ENCODE measurements at regions of chr5 and their contacts with region 1.

Region 1: DNA sequence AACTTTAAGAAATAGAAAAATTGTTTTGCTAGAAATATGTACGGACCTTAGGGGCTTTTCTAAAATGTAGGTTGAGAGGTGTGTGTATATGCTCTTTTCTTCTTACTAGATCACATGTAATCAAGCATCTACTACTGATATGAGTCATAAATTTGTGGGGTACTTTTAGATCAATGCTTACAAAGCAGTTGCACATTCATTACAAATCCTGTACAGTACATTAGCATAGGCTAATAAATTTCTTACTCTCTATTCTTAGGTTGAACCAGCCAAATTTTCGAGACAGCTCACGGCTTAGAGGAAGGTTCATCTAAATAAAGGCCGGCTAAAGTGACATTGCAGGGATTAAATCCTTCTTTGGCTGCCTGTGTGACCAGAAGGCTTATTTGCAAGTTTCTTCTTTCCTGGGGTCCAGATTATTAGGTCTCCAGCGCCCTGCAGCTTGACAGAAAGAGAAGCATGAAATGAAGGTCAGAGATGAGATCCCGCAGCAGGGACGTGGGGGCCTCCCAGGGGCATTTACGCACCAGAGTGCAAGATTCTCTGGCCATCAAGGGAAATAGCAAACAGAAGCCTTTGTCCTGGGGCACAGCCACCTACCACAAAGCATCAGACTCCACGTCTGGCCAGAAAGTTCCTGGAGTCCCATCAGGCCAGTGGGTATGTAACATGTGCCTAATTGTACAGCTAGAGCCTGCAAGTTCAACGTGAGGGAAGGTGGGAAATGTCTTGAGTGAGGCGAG is 53.0 kb downstream of the NIM1K start:
- DNase-seq: peak; percentile 57
- ATAC-seq: peak; percentile 77
- H3K4me3 ChIP-seq: peak overlapping the region; percentile 42
- H3K27ac ChIP-seq: peak overlapping the region; percentile 67
- H3K4me1 ChIP-seq: peaks cover 24% of the 10 kb centered on the region
- H3K27me3 ChIP-seq: no peaks in the 10 kb centered on the region
- CTCF ChIP-seq: no peak
- EP300 ChIP-seq: peak; percentile 74 to 76; a peak in 2 of 4 replicates
- POLR2A ChIP-seq: no peak
- RAD21 ChIP-seq: no peak

Region 2: DNA sequence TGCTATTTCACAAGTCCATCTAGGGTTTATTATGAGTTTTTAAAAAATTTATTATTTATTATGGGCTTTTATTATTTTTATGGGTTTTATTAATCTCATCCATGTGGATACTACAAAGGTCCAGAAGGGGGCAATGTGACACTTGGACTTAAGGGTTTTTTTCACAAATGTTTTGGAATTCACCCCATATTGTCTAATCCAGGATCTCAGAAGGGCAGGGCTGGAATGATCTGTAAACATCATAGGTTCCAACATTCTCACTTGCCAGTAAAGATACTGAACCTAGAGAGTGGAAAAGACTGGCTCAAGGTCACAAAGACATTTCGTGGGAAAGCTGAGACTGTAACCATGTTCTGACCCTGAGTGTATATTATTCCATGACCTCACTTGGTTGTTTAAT is 17.3 kb before region 1 on chr5:
- CTCF ChIA-PET with region 1: no interaction called
- POLR2A ChIA-PET with region 1: no interaction called
- RAD21 ChIA-PET with region 1: no interaction called
- SMC1A ChIA-PET with region 1: interaction called, 19 read pairs
- in situ Hi-C with region 1: no loop called
- intact Hi-C with region 1: no loop called
- DNase-seq: no peak
- ATAC-seq: peak; percentile 18; the same call in 1 of the 3 replicates
- H3K4me3 ChIP-seq: no peak overlapping the region
- H3K27ac ChIP-seq: no peak overlapping the region
- H3K4me1 ChIP-seq: no peaks in the 10 kb centered on the region
- H3K27me3 ChIP-seq: no peaks in the 10 kb centered on the region
- CTCF ChIP-seq: peak; percentile 17 to 50 (median 22); a peak in 4 of 6 replicates
- EP300 ChIP-seq: no peak
- POLR2A ChIP-seq: no peak
- RAD21 ChIP-seq: peak; percentile 72

Region 3: DNA sequence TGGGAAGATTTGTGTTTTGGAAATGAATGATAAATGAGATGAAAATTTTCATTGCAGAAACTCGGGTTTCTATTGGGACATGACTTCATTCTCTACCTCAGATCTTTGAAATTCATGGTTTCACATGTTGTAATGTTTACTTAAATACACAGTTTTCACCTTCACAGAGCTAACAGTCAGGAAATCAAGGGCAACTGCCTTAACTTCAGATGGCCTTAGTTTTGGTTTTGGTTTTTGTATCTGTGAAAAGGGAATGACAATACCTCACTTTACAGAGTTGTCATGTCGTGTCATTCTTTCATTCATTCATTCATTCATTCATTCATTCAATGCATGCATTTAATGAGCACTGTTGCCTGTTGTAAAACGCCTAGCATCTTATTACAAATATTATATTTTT is 11.0 kb before region 1 on chr5:
- CTCF ChIA-PET with region 1: no interaction called
- POLR2A ChIA-PET with region 1: no interaction called
- RAD21 ChIA-PET with region 1: no interaction called
- SMC1A ChIA-PET with region 1: interaction called, 19 read pairs
- in situ Hi-C with region 1: no loop called
- intact Hi-C with region 1: no loop called
- DNase-seq: no peak
- ATAC-seq: peak; percentile 79
- H3K4me3 ChIP-seq: no peak overlapping the region
- H3K27ac ChIP-seq: no peak overlapping the region
- H3K4me1 ChIP-seq: peaks cover 8% of the 10 kb centered on the region; the same call in 1 of the 2 replicates
- H3K27me3 ChIP-seq: no peaks in the 10 kb centered on the region
- CTCF ChIP-seq: no peak
- EP300 ChIP-seq: no peak
- POLR2A ChIP-seq: no peak
- RAD21 ChIP-seq: no peak

Region 4: DNA sequence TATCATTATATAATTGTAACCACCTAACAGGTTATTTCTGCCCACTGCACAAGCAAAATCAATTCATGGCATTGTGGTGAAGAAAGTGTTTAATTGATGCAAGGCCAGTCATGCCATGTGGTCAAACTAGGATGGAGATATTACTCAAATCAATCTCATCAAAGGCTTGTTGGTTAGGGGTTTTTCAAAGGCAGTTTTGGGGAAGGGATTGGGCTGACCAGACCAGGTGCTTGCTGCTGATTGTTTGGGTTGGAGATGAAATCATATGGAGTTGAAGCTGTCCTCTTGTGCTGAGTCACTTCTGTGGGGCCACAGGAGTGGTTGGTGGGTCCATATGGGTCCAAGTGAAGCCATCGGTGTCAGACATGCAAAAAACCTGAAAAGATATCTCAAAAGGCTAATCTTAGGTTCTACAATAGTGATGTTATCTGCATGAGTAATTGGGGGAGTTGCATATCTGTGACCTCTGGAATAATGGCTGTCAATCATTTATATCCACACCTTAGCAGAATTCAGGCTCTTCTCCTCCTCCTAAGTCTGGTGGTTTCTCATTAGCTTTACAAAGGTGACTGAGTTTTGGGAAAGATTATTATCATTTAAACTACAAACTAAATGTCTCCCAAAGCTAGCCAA is 23.3 kb after region 1 on chr5:
- CTCF ChIA-PET with region 1: no interaction called
- POLR2A ChIA-PET with region 1: interaction called, 4 read pairs
- RAD21 ChIA-PET with region 1: no interaction called
- SMC1A ChIA-PET with region 1: interaction called, 3 read pairs
- in situ Hi-C with region 1: no loop called
- intact Hi-C with region 1: loop called (anchors 1 kb)
- DNase-seq: peak; percentile 66
- ATAC-seq: peak; percentile 99
- H3K4me3 ChIP-seq: no peak overlapping the region
- H3K27ac ChIP-seq: no peak overlapping the region
- H3K4me1 ChIP-seq: no peaks in the 10 kb centered on the region; the same call in 1 of the 2 replicates
- H3K27me3 ChIP-seq: no peaks in the 10 kb centered on the region
- CTCF ChIP-seq: no peak
- EP300 ChIP-seq: peak; percentile 82 to 87; a peak in 3 of 4 replicates
- POLR2A ChIP-seq: no peak
- RAD21 ChIP-seq: no peak

Measured in GM12878 (cell line).